ENCODE measurements at regions of chr19 and their contacts with region 1.

Region 1: GRCh38 chr19:18408053-18408476 is 10.6 kb upstream of the LRRC25 start:
- DNase-seq: no peak
- ATAC-seq: peak; percentile 51
- H3K4me3 ChIP-seq: no peak overlapping the region
- H3K27ac ChIP-seq: peak overlapping the region; percentile 4; the same call in 1 of the 2 replicates
- H3K4me1 ChIP-seq: peaks cover 9 to 30% of the 10 kb centered on the region in 2 experiments; a peak in 3 of 4 replicates
- H3K27me3 ChIP-seq: no peaks in the 10 kb centered on the region
- CTCF ChIP-seq: peak; percentile 69 to 84 (median 73)
- POLR2A ChIP-seq: no peak
- RAD21 ChIP-seq: peak; percentile 75

Region 2: GRCh38 chr19:18214779-18215433 is 193.2 kb before region 1 on chr19:
- CTCF ChIA-PET with region 1: no interaction called
- POLR2A ChIA-PET with region 1: no interaction called
- RAD21 ChIA-PET with region 1: no interaction called
- intact Hi-C with region 1: loop called (anchors 2 kb)
- DNase-seq: no peak
- ATAC-seq: peak; percentile 56; the same call in 1 of the 2 replicates
- H3K4me3 ChIP-seq: no peak overlapping the region
- H3K27ac ChIP-seq: no peak overlapping the region
- H3K4me1 ChIP-seq: peaks cover 6 to 16% of the 10 kb centered on the region in 2 experiments; a peak in 3 of 4 replicates
- H3K27me3 ChIP-seq: no peaks in the 10 kb centered on the region
- CTCF ChIP-seq: no peak
- POLR2A ChIP-seq: no peak
- RAD21 ChIP-seq: no peak

Region 3: DNA sequence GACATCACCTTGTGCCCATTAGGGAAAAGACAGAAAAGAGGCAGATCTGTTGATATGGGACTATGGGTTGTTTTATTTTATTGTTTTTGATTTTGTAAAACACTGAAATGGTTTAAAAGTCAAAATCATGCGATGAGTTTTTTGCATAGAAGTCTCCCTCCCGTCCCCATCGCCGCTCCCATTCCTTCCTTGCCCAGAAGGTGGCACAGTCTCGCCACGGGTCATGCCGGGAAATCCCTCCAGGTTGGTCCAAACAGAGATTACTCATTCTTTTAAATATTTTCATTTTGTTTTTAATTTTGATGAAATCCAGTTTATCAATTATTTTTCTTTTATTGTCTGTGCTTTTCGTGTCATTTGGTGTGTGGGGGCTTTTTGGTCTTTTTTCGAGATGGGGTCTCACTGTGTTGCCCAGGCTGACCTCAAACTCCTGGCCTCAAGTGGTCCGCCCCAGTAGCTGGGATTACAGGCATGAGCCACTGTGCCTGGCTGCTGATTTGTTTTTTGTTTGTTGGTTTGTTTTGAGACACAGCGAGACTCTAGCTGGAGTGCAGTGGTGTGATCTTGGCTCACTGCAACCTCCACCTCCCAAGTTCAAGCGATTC is 58.4 kb before region 1 on chr19:
- CTCF ChIA-PET with region 1: interaction called, 18 read pairs
- POLR2A ChIA-PET with region 1: no interaction called
- RAD21 ChIA-PET with region 1: interaction called in 1 of 2 experiments, 4 read pairs
- intact Hi-C with region 1: loop called (anchors 1 kb)
- DNase-seq: no peak
- ATAC-seq: peak; percentile 83
- H3K4me3 ChIP-seq: no peak overlapping the region
- H3K27ac ChIP-seq: no peak overlapping the region
- H3K4me1 ChIP-seq: peaks cover 28 to 37% of the 10 kb centered on the region in 2 experiments
- H3K27me3 ChIP-seq: no peaks in the 10 kb centered on the region
- CTCF ChIP-seq: peak; percentile 86 to 93 (median 89); a peak in 5 of 6 replicates
- POLR2A ChIP-seq: no peak
- RAD21 ChIP-seq: peak; percentile 95

Region 4: GRCh38 chr19:18373892-18374629 is 34.0 kb before region 1 on chr19:
- CTCF ChIA-PET with region 1: no interaction called
- POLR2A ChIA-PET with region 1: no interaction called
- RAD21 ChIA-PET with region 1: no interaction called
- intact Hi-C with region 1: no loop called
- DNase-seq: peak; percentile 94
- ATAC-seq: peak; percentile 88
- H3K4me3 ChIP-seq: peak overlapping the region in 1 of 2 experiments; percentile 23; a peak in 3 of 4 replicates
- H3K27ac ChIP-seq: peak overlapping the region; percentile 92
- H3K4me1 ChIP-seq: peaks cover 61 to 64% of the 10 kb centered on the region in 2 experiments
- H3K27me3 ChIP-seq: no peaks in the 10 kb centered on the region
- CTCF ChIP-seq: no peak
- POLR2A ChIP-seq: no peak
- RAD21 ChIP-seq: no peak